ENCODE measurements at regions of chr12 and their contacts with region 1.

Region 1: GRCh38 chr12:14989790-14990189 is 16.9 kb downstream of the PDE6H start:
- H3K4me3 Mint-ChIP-seq: no peak overlapping the region
- H3K27ac Mint-ChIP-seq: peak overlapping the region; percentile 65
- H3K4me1 Mint-ChIP-seq: peaks cover 86% of the 10 kb centered on the region
- H3K27me3 Mint-ChIP-seq: no peaks in the 10 kb centered on the region

Region 2: GRCh38 chr12:14948672-14949071 is 41.1 kb before region 1 on chr12:
- intact Hi-C with region 1: loop called (anchors 2 kb)
- H3K4me3 Mint-ChIP-seq: peak overlapping the region; percentile 59
- H3K27ac Mint-ChIP-seq: peak overlapping the region; percentile 94
- H3K4me1 Mint-ChIP-seq: peaks cover 70% of the 10 kb centered on the region
- H3K27me3 Mint-ChIP-seq: no peaks in the 10 kb centered on the region